ENCODE measurements at regions of chr9 and their contacts with region 1.

Region 1: GRCh38 chr9:69199769-69200470 is 25.8 kb downstream of the TJP2 start:
- ATAC-seq: peak in 7 of 8 experiments; percentile 31 to 93 (median 57)
- H3K4me3 ChIP-seq: no peak overlapping the region
- H3K27ac ChIP-seq: no peak overlapping the region
- H3K4me1 ChIP-seq: peaks cover 0 to 3% of the 10 kb centered on the region in 2 donors

Region 2: GRCh38 chr9:69056191-69056815 is 143.6 kb before region 1 on chr9:
- in situ Hi-C with region 1: loop called in 6 of 9 experiments (anchors 10 to 25 kb)
- ATAC-seq: peak in 4 of 8 experiments; percentile 67 to 98 (median 98)
- H3K4me3 ChIP-seq: no peak overlapping the region
- H3K27ac ChIP-seq: no peak overlapping the region
- H3K4me1 ChIP-seq: no peaks in the 10 kb centered on the region

Region 3: GRCh38 chr9:69066955-69067354 is 133.0 kb before region 1 on chr9:
- in situ Hi-C with region 1: loop called in 4 of 9 experiments (anchors 10 to 25 kb)
- ATAC-seq: no peak
- H3K4me3 ChIP-seq: no peak overlapping the region
- H3K27ac ChIP-seq: no peak overlapping the region
- H3K4me1 ChIP-seq: no peaks in the 10 kb centered on the region

Measured in motor neuron (in vitro differentiated cells).